GM12878 (cell line): ENCODE measurements at regions of chr16 and their contacts with region 1.

Region 1: DNA sequence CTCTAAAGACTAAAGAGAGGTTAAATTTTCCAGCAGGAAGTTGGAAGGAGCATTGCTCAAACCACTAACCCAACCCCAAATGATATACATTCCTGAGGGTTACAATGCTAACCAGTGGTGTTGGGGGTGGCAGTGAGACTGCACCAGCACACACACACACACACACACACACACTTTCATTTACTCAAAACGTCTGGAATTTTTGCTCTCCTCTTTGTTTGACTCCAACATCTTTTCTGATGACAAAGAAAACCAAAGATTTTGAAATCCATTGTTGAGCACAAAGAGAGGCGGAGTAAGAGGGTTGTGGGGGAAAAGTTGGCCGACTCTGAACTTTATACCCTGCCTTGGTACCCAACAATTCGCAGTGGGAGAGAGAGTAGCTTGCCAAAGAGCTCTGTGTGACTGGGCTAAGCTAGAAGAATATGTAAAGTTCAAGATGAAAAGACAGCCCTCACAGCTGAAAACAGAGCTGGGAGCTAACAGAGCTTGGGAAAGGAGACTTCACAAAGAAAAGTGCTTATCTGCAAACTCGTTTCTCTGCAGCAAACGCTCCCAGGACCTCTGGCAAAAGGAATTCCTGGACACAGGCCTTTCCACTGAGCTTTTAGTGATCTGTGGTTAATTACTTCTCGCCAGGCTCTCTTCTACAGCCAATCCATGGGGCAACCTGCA is 426.0 kb upstream of the CDH11 start:
- DNase-seq: no peak
- ATAC-seq: no peak
- H3K4me3 ChIP-seq: no peak overlapping the region
- H3K27ac ChIP-seq: no peak overlapping the region
- H3K4me1 ChIP-seq: no peaks in the 10 kb centered on the region
- H3K27me3 ChIP-seq: no peaks in the 10 kb centered on the region
- CTCF ChIP-seq: no peak
- EP300 ChIP-seq: no peak
- POLR2A ChIP-seq: no peak
- RAD21 ChIP-seq: no peak

Region 2: DNA sequence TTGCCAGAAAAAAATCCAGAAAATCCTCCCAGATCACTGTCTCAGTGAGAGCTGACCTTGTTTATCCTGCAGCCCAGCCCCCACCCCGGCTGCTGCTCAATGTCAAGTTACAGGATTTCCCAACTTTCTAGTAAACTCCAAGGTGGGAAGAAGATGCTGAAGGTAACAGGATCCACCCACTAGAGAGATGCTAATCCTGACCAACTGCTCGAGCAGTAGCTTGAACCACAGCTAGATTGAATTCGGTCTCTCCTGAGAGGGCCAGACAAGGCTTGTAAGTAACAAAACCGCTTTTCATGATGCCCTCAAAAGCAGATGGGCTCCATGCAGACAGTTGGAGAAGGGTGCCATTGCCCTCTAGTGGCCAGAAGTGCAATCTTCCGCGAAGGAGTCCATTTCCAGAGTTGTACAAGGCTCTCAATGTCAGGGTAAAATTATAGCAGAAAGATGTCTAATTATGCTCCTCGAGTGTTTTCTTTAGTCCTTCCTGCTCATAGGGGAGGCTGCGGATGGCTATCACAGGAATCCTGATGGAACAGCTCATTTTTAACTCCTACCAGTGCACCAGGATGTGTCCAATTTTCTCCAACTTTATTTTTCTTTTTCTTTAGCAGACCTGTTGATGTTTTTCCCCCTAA is 430.0 kb before region 1 on chr16:
- CTCF ChIA-PET with region 1: no interaction called
- POLR2A ChIA-PET with region 1: no interaction called
- RAD21 ChIA-PET with region 1: no interaction called
- SMC1A ChIA-PET with region 1: no interaction called
- in situ Hi-C with region 1: no loop called
- intact Hi-C with region 1: no loop called
- DNase-seq: peak; percentile 2
- ATAC-seq: peak; percentile 88
- H3K4me3 ChIP-seq: no peak overlapping the region
- H3K27ac ChIP-seq: no peak overlapping the region
- H3K4me1 ChIP-seq: no peaks in the 10 kb centered on the region
- H3K27me3 ChIP-seq: no peaks in the 10 kb centered on the region; a peak in 2 of 4 replicates
- CTCF ChIP-seq: peak; percentile 91 to 94 (median 92)
- EP300 ChIP-seq: no peak
- POLR2A ChIP-seq: no peak
- RAD21 ChIP-seq: peak; percentile 89

Region 3: GRCh38 chr16:65489531-65490023 is 58.3 kb before region 1 on chr16:
- CTCF ChIA-PET with region 1: no interaction called
- POLR2A ChIA-PET with region 1: no interaction called
- RAD21 ChIA-PET with region 1: no interaction called
- SMC1A ChIA-PET with region 1: no interaction called
- in situ Hi-C with region 1: loop called (anchors 10 kb)
- intact Hi-C with region 1: no loop called
- DNase-seq: no peak
- ATAC-seq: no peak
- H3K4me3 ChIP-seq: no peak overlapping the region
- H3K27ac ChIP-seq: no peak overlapping the region
- H3K4me1 ChIP-seq: no peaks in the 10 kb centered on the region
- H3K27me3 ChIP-seq: no peaks in the 10 kb centered on the region
- CTCF ChIP-seq: no peak
- EP300 ChIP-seq: no peak
- POLR2A ChIP-seq: no peak
- RAD21 ChIP-seq: no peak

Region 4: GRCh38 chr16:65559846-65560245 is 11.9 kb after region 1 on chr16:
- CTCF ChIA-PET with region 1: no interaction called
- POLR2A ChIA-PET with region 1: no interaction called
- RAD21 ChIA-PET with region 1: no interaction called
- SMC1A ChIA-PET with region 1: no interaction called
- in situ Hi-C with region 1: no loop called
- intact Hi-C with region 1: no loop called
- DNase-seq: no peak
- ATAC-seq: no peak
- H3K4me3 ChIP-seq: no peak overlapping the region
- H3K27ac ChIP-seq: no peak overlapping the region
- H3K4me1 ChIP-seq: no peaks in the 10 kb centered on the region
- H3K27me3 ChIP-seq: no peaks in the 10 kb centered on the region
- CTCF ChIP-seq: no peak
- EP300 ChIP-seq: no peak
- POLR2A ChIP-seq: no peak
- RAD21 ChIP-seq: no peak